ENCODE measurements at regions of chr19 and their contacts with region 1.

Region 1: DNA sequence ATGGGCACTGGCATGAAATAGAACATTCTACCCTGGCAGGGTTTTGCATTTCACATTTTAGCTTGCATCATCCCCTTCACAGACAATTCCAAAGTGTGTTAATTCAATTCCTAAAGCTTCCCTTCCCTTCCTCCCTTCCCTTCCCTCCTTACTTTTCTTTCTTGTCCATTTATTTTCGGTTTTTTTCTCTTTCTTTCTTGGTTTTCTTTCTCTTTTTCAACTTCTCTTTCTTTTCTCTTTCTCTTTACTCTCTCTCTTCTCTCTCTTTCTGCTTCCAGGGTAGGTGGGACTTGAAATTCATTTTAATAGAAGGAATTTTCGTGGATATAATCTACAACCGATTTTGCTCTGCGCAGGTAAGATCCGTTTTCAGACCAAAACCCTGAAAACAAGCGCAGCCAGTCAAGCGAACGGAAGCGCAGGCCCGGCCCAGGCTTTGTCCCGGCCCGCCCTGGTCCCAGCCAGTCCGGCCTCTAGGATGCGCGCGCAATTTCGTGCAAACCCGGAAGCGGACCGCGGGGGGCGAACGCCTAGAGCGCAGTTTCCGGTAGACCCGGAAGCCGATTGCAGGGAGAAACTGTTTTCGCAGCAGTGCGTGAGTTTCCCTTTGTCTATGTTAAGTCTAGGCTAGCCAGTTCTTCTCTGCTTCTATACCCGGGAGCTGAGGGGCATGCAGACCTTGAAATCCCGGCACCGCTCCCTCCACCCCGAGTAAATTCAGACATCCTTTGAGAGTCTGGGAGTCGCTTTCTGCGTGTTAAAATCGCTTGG is at the start of gene ZNF528:
- DNase-seq: peak; percentile 98
- ATAC-seq: peak; percentile 100
- total RNA-seq, gene ZNF528: 12.6 TPM

Region 2: DNA sequence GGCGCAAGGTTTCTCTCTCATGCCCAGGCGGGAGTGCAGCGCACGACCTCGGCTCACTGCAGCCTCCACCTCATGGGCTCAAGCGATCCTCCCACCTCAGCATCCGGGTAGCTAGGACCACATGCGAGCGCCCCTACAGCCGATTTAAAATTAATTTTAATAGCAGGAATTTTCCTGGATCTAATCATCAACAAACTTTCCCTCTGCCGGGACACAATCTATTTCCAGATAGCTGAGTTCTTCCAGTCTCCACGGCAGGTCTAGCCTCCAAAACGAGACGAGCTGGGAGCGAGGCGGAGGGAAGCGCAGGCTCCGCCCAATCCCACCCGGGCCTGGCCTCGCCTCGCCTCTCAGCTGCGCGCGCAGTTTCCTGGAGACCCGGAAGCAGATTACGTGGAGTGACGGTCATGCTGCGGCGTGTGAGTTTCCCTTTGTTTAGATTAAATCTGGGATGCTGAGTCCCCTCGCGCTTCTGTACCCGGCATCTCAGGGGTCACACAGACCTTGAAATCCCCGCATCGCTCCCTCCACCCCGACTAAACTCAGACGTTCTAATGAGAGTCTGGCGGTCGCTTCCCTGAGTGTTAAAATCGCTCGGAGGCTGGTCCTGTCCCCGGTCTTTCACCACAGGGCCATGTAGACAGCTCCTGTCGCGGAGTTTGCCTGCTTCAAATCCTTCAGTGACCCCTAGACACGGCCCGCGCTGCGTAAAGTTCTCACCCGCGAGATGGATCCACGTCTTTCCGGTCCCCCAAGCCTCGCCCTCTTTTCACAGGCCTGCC is 27.7 kb before region 1 on chr19 and contains the start of gene ZNF880:
- intact Hi-C with region 1: loop called (anchors 2 kb)
- DNase-seq: peak; percentile 97
- ATAC-seq: peak; percentile 100
- total RNA-seq, gene ZNF880: 18.2 TPM

Region 3: DNA sequence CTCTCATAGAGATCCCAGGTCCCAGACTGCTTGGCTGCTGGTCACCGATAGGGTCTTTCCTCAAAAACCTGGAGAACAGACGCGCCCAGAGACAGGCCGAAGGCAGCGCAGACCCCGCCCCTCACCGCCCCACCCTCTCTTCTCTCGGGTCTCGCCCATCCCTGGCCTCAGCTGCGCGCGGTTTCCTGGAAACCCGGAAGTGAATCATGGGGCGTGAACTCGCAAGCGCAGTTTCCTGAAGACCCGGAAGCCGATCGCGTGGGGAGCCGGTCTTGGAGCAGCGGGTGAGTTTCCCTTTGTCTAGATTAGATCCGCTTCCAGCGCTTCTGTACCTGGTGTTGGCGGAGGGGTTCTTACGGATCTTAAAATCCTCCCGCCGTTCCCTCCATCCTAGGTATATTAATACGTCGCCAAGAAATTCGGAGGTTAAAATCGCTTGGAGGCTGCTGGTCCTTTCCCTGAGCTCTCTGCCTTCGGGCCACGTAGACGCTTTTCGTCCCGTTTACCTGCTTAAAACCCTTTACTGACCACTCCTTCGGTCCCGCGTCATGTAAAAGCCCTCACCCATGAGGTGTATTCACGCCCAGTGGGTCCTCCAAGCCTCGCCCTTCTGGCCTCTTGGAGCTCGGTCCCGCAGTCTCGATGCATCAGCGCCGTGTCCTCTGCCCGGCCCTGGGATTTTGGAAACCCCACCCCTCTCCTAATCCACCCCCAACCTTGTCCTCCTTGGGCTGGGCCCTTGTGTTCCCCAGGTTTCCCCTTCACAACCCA is 56.0 kb after region 1 on chr19 and contains the start of gene ZNF578:
- intact Hi-C with region 1: loop called (anchors 5 kb)
- DNase-seq: peak; percentile 88
- ATAC-seq: peak; percentile 95
- total RNA-seq, gene ZNF578: 1.6 TPM

Measured in Right ventricle myocardium inferior (tissue), 1 donor.